Activated T-helper 2 cell treated with anti-CD3 and anti-CD28 coated beads, Interferon-gamma antibody, Interleukin-2, Interleukin-4, amounts not matched to agents 10 μg/mL and 5 μg/mL and 100 μg/mL, durations not matched to agents 14 hours and 24 hours and 36 hours (primary cell): ENCODE measurements at regions of chr1 and their contacts with region 1.

Region 1: DNA sequence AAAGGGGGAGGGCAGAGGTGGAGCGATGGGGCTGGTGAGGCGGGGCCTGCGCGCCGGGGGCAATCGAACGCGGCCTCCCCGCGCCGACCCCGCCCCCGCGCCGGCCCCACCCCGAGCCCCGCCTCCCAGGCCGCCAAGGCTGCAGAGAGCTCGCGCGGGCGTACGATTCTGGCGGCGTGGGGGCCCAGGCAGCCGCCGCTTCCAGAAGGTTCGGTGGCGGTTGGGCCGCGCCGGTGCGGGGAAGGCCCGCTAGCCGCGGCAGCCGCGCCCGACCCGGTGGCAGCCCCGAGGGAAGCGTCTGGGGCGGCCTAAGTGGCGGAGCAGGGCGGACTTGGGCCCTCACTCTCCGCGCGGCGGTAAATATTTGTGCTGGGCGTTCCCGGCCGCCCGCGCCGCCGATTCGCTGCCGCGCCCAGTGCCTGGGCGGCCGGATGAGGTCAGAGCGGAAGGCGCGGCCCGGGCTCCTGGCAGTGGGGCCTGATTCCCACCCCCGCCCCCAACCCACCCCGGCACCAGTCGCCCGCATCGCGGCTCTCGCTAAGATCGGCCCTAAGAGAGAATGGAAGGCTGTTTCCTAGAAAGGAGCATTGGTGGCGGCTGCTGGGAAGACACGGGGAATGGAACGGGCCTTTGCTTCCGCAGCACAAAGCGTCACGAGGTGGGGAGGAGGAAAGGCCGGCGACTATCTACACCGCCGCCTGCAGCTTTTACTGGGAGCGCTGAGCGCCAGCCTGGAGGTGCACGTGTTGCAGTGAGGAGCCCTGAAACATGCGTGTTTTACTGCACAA is at the start of gene ACOT7:
- DNase-seq: peak; percentile 87
- H3K4me3 Mint-ChIP-seq: peak within 1 kb of the TSS; percentile 84
- H3K27ac Mint-ChIP-seq: peak within 1 kb of the TSS; percentile 91
- H3K4me1 Mint-ChIP-seq: peaks cover 25% of the 10 kb centered on the region
- H3K27me3 Mint-ChIP-seq: no peaks in the 10 kb centered on the region
- total RNA-seq, gene ACOT7: 128 and 132 TPM in 2 replicates

Region 2: DNA sequence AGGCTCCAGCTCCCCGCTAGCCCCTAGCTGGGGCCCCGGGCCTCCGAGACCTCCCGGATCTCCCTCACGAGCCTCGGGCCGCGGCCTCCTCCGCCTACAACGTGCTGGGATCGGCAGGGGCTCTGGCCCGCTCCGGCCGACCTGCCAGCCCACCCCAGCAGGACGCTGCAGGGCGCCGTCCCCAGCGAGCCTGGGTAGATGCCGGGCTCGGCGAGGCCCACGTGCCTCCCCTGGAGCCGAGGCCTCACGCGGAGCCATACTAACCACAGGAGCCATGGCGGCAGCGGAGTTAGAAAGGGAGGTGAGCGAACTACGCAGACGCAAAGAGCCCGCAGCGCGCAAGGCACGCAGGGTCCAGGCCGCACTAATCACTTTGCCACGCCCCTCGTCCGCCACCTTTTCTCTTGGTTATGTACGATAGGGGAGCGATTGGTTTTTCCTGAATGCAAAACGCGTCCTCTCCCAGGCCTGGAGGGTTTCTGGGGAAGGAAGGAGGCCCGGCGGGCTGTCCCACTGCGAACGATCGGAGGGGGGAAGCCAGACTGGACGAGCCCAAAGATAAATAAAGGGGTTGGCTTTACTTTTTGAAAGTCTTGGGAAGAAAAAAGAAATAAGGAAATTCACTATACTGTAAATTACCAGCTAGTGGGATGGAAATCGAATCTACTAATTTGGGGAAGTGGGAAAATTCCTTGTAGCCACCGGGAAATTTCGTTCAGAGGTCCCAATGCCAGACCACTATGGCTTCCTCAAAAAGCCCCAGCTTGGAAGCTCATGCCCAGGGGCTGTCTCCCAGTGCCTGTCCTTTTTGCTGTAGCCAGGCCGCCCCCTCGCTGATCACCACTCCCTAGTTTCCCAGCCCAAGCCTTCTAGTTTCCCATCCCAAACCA is 194.1 kb before region 1 on chr1 and contains the start of gene RPL22:
- intact Hi-C with region 1: loop called (anchors 2 kb)
- DNase-seq: peak; percentile 97
- H3K4me3 Mint-ChIP-seq: peak within 1 kb of the TSS; percentile 98
- H3K27ac Mint-ChIP-seq: peak within 1 kb of the TSS; percentile 94
- H3K4me1 Mint-ChIP-seq: peaks cover 29% of the 10 kb centered on the region
- H3K27me3 Mint-ChIP-seq: no peaks in the 10 kb centered on the region
- total RNA-seq, gene RPL22: 473 and 533 TPM in 2 replicates

Region 3: GRCh38 chr1:6343506-6344405 is 49.8 kb before region 1 on chr1:
- intact Hi-C with region 1: loop called (anchors 1 kb)
- DNase-seq: peak; percentile 60
- H3K4me3 Mint-ChIP-seq: no peak overlapping the region
- H3K27ac Mint-ChIP-seq: no peak overlapping the region
- H3K4me1 Mint-ChIP-seq: peaks cover 10% of the 10 kb centered on the region
- H3K27me3 Mint-ChIP-seq: no peaks in the 10 kb centered on the region

Region 4: DNA sequence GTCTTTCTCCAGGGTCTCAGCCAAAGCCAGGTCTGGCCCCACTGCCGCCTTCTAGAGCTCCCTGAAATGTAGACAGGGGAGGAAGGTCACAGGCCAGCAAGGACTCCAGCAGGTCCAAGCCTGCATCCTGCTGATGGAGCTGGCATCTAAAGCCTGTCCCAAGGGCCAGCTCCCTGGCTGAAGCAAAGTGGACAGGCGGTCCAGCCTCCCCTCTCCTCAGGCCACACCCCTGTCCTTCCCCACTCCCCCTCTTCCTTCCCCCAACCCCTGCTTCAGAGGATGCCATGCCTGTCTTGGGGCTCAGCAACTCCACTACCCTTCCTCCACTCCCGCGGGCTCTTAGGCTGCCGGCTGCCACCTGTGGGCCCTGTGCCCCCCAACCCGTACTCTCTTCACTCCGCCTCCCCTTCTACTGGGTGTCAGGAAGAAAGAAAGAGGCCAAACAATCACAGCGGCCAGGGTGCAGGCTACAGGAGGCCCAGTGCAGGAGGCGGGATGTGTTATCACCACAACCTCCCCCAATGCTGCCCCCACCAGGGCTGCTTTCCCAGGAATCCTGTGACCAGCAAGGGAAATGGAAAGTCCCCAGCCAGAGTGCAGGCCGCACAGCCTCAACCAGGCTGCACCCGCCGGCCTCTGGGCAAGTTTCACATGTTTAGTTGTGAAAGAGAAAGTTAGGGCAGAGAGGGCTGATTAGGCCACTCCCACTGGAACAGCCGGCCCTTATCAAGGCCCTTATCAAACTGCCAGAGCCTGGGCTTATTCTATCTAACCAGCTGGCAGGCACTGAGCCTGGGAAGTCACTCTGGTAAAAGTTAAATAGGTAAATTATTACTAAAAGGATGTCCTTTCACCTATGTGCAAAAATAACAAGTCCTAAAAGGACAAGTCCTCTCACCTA is 34.1 kb before region 1 on chr1:
- intact Hi-C with region 1: loop called (anchors 1 kb)
- DNase-seq: peak; percentile 71
- H3K4me3 Mint-ChIP-seq: peak overlapping the region; percentile 54
- H3K27ac Mint-ChIP-seq: peak overlapping the region; percentile 92
- H3K4me1 Mint-ChIP-seq: peaks cover 39% of the 10 kb centered on the region
- H3K27me3 Mint-ChIP-seq: no peaks in the 10 kb centered on the region

Region 5: GRCh38 chr1:6438047-6438525 is 44.5 kb after region 1 on chr1:
- intact Hi-C with region 1: no loop called
- DNase-seq: peak; percentile 65
- H3K4me3 Mint-ChIP-seq: no peak overlapping the region
- H3K27ac Mint-ChIP-seq: no peak overlapping the region
- H3K4me1 Mint-ChIP-seq: peaks cover 3% of the 10 kb centered on the region
- H3K27me3 Mint-ChIP-seq: peaks cover 27% of the 10 kb centered on the region

Region 6: GRCh38 chr1:6784560-6785317 is 391.1 kb after region 1 on chr1:
- intact Hi-C with region 1: loop called (anchors 10 kb)
- DNase-seq: peak; percentile 100
- H3K4me3 Mint-ChIP-seq: peak overlapping the region; percentile 82
- H3K27ac Mint-ChIP-seq: peak overlapping the region; percentile 85
- H3K4me1 Mint-ChIP-seq: peaks cover 39% of the 10 kb centered on the region
- H3K27me3 Mint-ChIP-seq: peaks cover 8% of the 10 kb centered on the region